A549 (cell line): ENCODE measurements at regions of chr19 and their contacts with region 1.

Region 1: GRCh38 chr19:43754503-43755255 is at the start of gene SMG9:
- DNase-seq: peak; percentile 99
- ATAC-seq: peak; percentile 85 to 89
- H3K4me3 ChIP-seq: peak within 1 kb of the TSS; percentile 75
- H3K27ac ChIP-seq: peak within 1 kb of the TSS; percentile 94 to 99
- H3K4me1 ChIP-seq: peaks cover 61% of the 10 kb centered on the region
- CTCF ChIP-seq: no peak
- EP300 ChIP-seq: 0 out of 5 replicates have a peak, but pooled peaks of 1 of the 2 experiments have one; percentile 12
- POLR2A ChIP-seq: peak; percentile 61
- RAD21 ChIP-seq: no peak; a peak in 1 of 5 replicates
- polyA plus RNA-seq, gene SMG9: 14.2 and 24.4 TPM in 2 replicates

Region 2: GRCh38 chr19:43562698-43563241 is 191.9 kb before region 1 on chr19:
- CTCF ChIA-PET with region 1: no interaction called
- POLR2A ChIA-PET with region 1: no interaction called
- DNase-seq: no peak
- ATAC-seq: no peak
- H3K4me3 ChIP-seq: no peak overlapping the region
- H3K27ac ChIP-seq: no peak overlapping the region
- H3K4me1 ChIP-seq: peaks cover 9% of the 10 kb centered on the region; the same call in 1 of the 3 replicates
- CTCF ChIP-seq: no peak
- EP300 ChIP-seq: no peak
- POLR2A ChIP-seq: no peak
- RAD21 ChIP-seq: no peak

Region 3: DNA sequence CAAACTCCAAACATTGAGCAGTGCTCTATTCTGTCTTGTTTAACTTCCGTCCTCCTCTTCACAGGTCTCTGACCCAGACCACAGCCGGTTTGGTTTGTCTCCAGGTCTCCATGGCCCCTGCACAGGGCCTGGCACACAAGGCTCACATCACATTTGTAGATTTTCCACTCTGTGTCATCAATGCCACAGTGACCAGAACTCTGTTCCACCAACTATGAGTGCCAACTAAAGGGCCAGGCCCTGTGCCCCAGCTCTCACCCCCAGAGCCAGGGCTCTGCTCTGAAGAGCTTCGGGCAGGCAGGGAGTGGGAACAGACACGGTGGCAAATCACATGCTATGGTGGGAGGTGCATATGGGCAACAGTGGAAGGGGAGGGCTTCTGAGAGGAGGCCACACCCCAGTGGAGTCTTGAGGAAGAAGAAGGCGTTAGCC is 15.9 kb before region 1 on chr19:
- CTCF ChIA-PET with region 1: interaction called, 340 read pairs
- POLR2A ChIA-PET with region 1: interaction called, 5 read pairs
- DNase-seq: peak in 1 of 2 experiments; percentile 45
- ATAC-seq: peak in 1 of 2 experiments; percentile 71; a peak in 3 of 6 replicates
- H3K4me3 ChIP-seq: no peak overlapping the region
- H3K27ac ChIP-seq: peak overlapping the region; percentile 60 to 73; a peak in 4 of 6 replicates
- H3K4me1 ChIP-seq: peaks cover 28% of the 10 kb centered on the region
- CTCF ChIP-seq: no peak
- EP300 ChIP-seq: no peak
- POLR2A ChIP-seq: no peak
- RAD21 ChIP-seq: no peak

Region 4: GRCh38 chr19:43842007-43842406 is 87.3 kb after region 1 on chr19:
- CTCF ChIA-PET with region 1: no interaction called
- POLR2A ChIA-PET with region 1: no interaction called
- DNase-seq: peak in 1 of 2 experiments; percentile 36
- ATAC-seq: no peak
- H3K4me3 ChIP-seq: no peak overlapping the region
- H3K27ac ChIP-seq: no peak overlapping the region
- H3K4me1 ChIP-seq: no peaks in the 10 kb centered on the region
- CTCF ChIP-seq: no peak
- EP300 ChIP-seq: no peak
- POLR2A ChIP-seq: no peak
- RAD21 ChIP-seq: no peak